Motor neuron (in vitro differentiated cells): ENCODE measurements at regions of chr19 and their contacts with region 1.

Region 1: DNA sequence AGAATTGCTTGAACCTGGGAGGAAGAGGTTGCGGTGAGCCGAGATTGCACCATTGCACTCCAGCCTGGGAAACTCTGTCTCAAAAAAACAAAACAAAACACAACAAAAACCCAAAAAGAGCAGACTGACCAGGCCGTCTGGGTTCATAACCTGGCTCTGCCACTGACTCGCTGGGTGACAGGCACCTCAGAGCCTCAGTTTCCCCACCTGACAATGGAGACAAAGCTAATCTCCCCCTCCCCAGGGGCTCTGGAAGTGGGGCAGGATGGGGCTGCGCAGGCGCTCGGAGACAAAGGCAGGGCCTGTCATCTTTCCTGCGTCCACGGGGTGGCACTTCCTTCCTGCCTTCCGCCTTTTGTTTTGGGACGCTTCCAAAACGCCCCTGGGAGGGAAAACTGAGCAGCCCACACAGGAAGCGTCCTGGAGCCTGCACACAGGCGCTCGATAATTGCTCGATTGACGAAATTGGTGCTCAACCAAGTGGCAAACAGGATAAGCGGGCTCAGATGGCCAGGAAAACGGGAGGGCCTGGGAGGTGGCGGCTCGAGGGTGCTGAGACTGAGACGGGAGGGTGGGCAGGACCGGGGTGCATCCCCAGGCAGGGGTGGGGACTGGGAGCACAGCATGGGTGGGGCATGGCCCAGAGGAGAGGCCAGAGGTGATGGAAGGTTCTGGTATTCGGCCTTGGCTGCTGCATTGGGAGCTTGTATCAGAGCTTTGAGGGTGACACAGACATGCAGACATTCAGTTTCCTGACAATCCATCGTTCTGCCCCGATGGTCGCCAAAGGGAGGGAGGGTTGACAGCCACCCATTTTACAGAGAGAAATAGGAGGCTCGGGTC is 17.8 kb downstream of the SPC24 start:
- ATAC-seq: peak; percentile 13 to 61 (median 49)
- H3K4me3 ChIP-seq: peak overlapping the region; percentile 21 to 35 (median 25)
- H3K27ac ChIP-seq: peak overlapping the region; percentile 31 to 53
- H3K4me1 ChIP-seq: peaks cover 10 to 29% of the 10 kb centered on the region in 2 donors

Region 2: DNA sequence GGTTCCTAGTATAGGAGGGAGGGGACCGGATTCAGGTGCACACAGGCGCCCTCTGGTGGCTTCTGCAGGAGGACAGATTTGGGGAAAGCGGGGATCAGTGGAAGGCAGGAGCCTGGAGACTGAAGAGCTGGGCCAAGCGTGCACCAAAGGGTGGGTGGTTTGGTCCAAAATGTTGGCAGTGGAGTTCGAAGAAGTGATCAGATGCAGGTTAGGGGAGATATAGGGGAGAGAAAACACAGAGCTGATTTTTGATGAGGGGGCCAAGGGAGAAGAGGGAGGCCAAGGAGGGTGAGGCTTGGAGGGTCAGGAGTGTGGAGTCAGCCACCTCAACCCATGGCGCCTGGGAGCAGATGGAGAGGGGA is 273.2 kb before region 1 on chr19:
- in situ Hi-C with region 1: no loop called
- ATAC-seq: peak; percentile 57 to 99 (median 66)
- H3K4me3 ChIP-seq: no peak overlapping the region
- H3K27ac ChIP-seq: peak overlapping the region in 1 of 2 donors; percentile 7
- H3K4me1 ChIP-seq: peaks cover 11 to 26% of the 10 kb centered on the region in 2 donors

Region 3: DNA sequence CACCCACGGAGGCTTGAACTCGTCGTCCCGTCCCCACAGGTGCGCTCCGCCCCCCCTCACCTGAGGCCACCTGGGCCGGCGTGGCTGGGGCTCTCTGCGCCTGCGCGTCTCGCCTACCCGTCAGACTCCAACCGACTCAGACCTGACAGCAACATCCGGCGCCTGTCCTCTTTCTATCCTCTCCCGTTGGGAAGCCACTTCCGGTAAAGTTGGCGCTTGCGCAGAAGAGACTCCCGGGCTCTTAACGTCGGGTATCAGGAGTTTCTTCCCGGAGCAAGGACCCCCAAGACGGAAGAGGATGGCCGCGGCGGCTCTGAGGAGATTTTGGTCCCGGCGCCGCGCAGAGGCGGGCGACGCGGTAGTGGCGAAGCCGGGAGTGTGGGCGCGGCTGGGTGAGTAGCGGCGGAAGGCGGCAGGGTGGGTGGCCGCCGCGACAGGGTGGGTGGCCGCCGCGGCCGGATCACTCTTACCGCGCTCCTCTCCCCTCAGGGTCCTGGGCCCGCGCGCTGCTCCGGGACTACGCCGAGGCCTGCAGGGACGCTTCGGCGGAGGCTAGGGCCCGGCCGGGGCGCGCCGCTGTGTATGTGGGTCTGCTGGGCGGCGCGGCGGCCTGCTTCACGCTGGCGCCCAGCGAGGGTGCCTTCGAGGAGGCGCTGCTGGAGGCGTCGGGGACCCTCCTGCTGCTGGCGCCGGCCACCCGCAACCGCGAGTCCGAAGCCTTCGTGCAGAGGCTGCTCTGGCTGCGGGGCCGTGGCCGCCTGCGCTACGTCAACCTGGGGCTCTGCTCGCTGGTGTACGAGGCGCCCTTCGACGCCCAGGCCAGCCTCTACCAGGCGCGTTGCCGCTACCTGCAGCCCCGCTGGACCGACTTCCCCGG is 209.0 kb before region 1 on chr19 and contains the starts of genes TIMM29 and YIPF2:
- in situ Hi-C with region 1: no loop called
- ATAC-seq: peak; percentile 86 to 96 (median 90)
- H3K4me3 ChIP-seq: peak within 1 kb of the TSS; percentile 68 to 86 (median 82)
- H3K27ac ChIP-seq: peak within 1 kb of the TSS; percentile 92 to 97
- H3K4me1 ChIP-seq: peaks cover 13 to 14% of the 10 kb centered on the region in 2 donors
- total RNA-seq, gene TIMM29: 16.9 to 25.5 (median 21.4) TPM
- total RNA-seq, gene YIPF2: 35.9 to 107 (median 58.1) TPM

Region 4: DNA sequence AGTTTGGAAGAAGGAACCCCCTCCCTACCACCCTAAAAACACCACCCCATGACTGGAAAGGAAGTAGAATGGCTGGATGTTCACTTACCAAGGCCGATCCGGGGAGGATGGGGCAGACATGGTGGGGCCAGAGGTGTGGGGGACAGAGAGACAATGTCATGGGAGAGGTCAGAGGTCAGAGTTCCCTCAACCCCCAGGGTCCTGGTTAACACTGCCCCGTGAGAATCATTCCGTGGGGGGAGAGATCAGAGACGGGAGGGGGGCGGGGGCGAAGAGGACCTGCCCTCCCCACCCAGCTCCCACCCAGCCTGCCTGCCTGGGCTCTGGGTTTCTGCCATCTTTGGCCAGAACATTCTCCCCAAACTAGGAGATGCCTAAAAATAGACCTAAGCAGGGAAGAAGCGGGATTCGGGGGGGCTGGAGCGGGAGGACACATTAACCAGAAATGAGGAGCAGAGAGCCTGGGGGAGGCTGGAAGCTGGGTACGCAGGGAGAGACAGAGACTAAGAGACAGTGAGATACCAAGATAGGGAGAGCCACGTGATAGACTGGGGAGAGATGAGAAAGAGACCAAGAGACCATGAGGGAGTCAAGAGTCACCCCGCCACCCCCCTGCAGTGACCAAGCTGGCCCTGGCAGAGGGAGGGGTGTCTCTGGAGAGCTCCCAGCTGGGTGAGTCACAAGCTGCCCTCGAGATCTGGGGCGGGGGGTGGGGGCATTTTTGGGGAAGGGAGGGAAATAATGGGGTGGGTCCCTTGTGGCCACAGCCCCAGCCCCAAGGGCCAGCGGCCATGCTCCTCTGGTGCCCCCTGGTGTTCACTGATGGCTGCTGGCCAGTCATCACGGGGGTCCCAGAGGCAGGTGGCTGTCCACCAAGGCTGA is 65.7 kb after region 1 on chr19:
- in situ Hi-C with region 1: loop called in 3 of 9 experiments (anchors 10 kb)
- ATAC-seq: peak; percentile 51 to 87 (median 66)
- H3K4me3 ChIP-seq: no peak overlapping the region
- H3K27ac ChIP-seq: no peak overlapping the region
- H3K4me1 ChIP-seq: peaks cover 0 to 6% of the 10 kb centered on the region in 2 donors

Region 5: DNA sequence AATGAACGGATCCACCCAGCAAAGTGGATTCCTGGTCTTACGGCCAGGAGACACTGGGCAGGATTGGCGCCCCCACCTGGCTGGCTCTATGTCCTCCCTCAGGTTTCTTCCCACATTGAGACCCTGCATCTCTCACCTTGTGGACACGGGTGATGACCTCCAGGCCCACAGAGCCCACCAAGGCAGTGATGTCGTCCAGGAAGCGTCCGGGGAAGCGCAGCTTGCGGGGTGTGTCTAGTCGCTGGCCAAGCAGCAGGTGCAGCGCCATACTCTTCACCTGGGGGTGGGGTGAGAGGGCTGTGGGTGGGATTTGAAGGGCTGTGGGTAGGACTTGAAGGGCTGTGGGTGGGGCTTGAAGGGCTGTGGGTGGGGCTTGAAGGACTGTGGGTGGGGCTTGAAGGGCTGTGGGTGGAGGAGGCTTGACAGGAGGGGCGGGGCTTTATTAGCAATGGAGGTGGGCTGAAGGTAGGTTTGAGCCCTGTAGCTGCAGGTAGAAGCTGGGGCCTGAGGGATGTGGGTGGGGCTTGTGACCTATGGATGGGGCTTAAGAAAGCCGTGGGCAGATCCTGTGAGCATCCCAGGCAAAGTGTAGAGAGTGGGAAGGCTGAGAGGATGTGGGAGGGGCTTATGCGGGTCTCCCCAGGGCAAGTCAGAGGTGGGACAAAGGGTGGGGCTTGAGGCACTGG is 89.6 kb after region 1 on chr19:
- in situ Hi-C with region 1: no loop called
- ATAC-seq: peak in 6 of 8 experiments; percentile 18 to 69 (median 30)
- H3K4me3 ChIP-seq: no peak overlapping the region
- H3K27ac ChIP-seq: no peak overlapping the region
- H3K4me1 ChIP-seq: no peaks in the 10 kb centered on the region